Mammary epithelial cell (primary cell): ENCODE measurements at regions of chr3 and their contacts with region 1.

Region 1: DNA sequence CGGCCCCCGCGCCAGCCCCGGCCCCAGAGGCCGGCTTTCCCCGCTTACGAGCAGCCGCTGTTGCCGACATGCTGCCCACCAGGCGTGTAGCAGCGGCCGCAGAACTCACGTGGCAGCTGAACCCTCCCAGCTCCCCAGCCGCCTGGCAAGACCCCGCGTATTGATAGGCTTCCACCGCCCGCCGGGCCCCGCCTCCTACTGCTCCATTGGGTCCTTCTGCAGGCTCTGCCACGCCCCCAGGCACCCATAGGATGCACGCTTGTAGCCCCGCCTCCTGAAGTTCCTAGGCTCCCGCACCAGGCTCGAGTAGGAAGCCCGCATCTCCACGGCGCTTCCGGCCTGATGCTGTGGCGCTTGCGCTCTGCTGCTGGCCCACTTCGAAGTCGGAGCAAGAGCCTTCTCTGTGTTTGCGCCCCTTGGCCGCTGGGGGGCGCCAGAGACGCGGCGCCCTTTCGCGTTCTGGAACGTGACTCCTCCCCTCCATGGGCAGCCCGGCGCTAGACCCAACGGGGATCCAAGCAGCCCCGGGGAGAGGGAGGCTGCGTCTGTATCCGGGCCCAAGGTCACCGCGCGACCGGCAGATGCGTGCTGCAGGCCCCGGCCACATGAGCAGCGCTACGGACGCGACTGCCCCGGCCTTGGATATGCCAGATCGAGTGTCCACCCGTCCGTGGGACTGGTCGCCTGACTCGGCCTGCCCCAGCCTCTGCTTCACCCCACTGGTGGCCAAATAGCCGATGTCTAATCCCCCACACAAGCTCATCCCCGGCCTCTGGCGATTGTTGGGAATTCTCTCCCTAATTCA is at the starts of genes PARP3 and RRP9:
- DNase-seq: peak; percentile 100
- H3K4me3 ChIP-seq: peak within 1 kb of the TSS; percentile 62 to 80 (median 73)
- H3K27ac ChIP-seq: peak within 1 kb of the TSS; percentile 38
- H3K4me1 ChIP-seq: peaks cover 21% of the 10 kb centered on the region
- H3K27me3 ChIP-seq: no peaks in the 10 kb centered on the region
- CTCF ChIP-seq: peak; percentile 98 to 100
- total RNA-seq, gene PARP3: 16.1 to 19.7 TPM
- total RNA-seq, gene RRP9: 22.3 to 44.5 TPM

Region 2: GRCh38 chr3:51845129-51845528 is 96.9 kb before region 1 on chr3:
- CTCF ChIA-PET with region 1: no interaction called
- dilution Hi-C with region 1: loop called (anchors 5 kb)
- in situ Hi-C with region 1: no loop called
- intact Hi-C with region 1: no loop called
- DNase-seq: no peak
- H3K4me3 ChIP-seq: no peak overlapping the region
- H3K27ac ChIP-seq: no peak overlapping the region
- H3K4me1 ChIP-seq: no peaks in the 10 kb centered on the region
- H3K27me3 ChIP-seq: no peaks in the 10 kb centered on the region
- CTCF ChIP-seq: no peak

Region 3: DNA sequence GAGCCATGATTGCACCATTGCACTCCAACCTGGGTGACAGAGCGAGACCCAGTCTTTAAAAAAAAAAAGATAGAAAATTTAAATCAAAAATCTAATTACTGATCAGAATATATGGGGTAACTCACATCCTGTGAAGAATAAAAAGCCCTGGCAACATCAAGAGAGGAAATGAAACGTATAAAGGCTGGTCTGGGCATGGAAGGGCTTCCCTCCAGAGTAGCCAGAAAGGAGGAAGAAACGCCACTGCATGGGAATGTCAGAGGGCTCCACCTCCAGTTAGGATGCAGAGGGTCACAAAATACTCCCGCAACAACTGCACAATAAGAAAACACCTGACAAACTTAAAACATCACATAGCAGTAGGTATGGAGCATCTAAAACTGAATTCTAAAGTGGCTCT is 34.0 kb before region 1 on chr3:
- CTCF ChIA-PET with region 1: no interaction called
- dilution Hi-C with region 1: no loop called
- in situ Hi-C with region 1: no loop called
- intact Hi-C with region 1: no loop called
- DNase-seq: peak; percentile 29
- H3K4me3 ChIP-seq: no peak overlapping the region
- H3K27ac ChIP-seq: no peak overlapping the region
- H3K4me1 ChIP-seq: peaks cover 12% of the 10 kb centered on the region
- H3K27me3 ChIP-seq: no peaks in the 10 kb centered on the region
- CTCF ChIP-seq: no peak

Region 4: GRCh38 chr3:51974963-51975851 is 33.2 kb after region 1 on chr3 and contains the start of gene ABHD14A:
- CTCF ChIA-PET with region 1: interaction called, 7 read pairs
- dilution Hi-C with region 1: no loop called
- in situ Hi-C with region 1: no loop called
- intact Hi-C with region 1: loop called (anchors 1 kb)
- DNase-seq: peak; percentile 67
- H3K4me3 ChIP-seq: peak within 1 kb of the TSS; percentile 43 to 79 (median 68)
- H3K27ac ChIP-seq: peak within 1 kb of the TSS; percentile 18
- H3K4me1 ChIP-seq: peaks cover 48% of the 10 kb centered on the region
- H3K27me3 ChIP-seq: no peaks in the 10 kb centered on the region
- CTCF ChIP-seq: no peak
- total RNA-seq, gene ABHD14A: 9.7 to 10.0 TPM

Region 5: DNA sequence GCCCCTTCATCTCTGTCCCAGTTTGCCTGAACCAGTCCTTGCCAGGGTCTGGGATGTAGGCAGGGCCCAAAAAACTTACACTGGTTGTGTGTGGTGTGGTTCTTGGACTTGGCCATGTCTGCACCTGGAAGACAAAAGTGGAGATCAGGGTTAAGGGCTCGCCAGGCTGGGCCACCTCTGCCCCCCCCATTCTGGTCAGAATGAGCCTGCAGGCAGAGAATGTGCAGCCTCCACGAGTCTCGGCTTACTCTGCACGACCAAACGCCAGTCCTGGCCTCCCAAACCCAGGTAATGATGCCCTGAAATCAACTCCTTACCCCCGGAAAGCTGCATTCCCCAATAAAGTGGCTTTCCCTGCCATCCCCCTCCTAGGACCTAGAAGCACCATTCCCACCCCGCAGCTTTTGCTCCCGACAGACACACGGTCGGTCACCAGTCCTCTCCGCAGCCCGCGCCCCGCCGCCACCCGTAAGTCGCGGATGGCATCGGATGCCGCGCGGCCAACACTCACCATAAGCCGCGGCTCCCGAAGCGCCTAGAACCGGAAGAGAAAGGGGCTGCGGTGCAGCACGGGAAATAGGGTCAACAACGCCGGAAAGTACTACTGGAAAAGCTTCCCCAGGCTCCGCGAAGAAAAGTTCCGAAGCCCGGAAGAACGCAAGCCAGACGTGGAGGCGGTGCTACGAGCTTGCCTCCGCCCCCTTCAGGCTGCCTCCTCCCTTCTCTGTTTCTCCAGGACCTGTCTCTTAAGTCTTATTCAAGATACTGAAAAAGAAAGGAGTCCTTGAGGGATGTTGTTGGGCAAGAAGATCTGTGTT is 53.6 kb after region 1 on chr3 and contains the start of gene RPL29:
- CTCF ChIA-PET with region 1: no interaction called
- dilution Hi-C with region 1: no loop called
- in situ Hi-C with region 1: no loop called
- intact Hi-C with region 1: loop called (anchors 1 kb)
- DNase-seq: peak; percentile 90
- H3K4me3 ChIP-seq: peak within 1 kb of the TSS; percentile 59 to 96 (median 74)
- H3K27ac ChIP-seq: peak within 1 kb of the TSS; percentile 85
- H3K4me1 ChIP-seq: peaks cover 23% of the 10 kb centered on the region
- H3K27me3 ChIP-seq: no peaks in the 10 kb centered on the region
- CTCF ChIP-seq: no peak
- total RNA-seq, gene RPL29: 1,040 to 1,174 TPM

Region 6: GRCh38 chr3:52123106-52123725 is 181.2 kb after region 1 on chr3:
- CTCF ChIA-PET with region 1: no interaction called
- dilution Hi-C with region 1: no loop called
- in situ Hi-C with region 1: no loop called
- intact Hi-C with region 1: loop called (anchors 1 kb)
- DNase-seq: peak; percentile 66
- H3K4me3 ChIP-seq: no peak overlapping the region
- H3K27ac ChIP-seq: no peak overlapping the region
- H3K4me1 ChIP-seq: peaks cover 26% of the 10 kb centered on the region
- H3K27me3 ChIP-seq: no peaks in the 10 kb centered on the region
- CTCF ChIP-seq: peak; percentile 99